ENCODE measurements at regions of chr15 and their contacts with region 1.

Region 1: GRCh38 chr15:81274931-81275707 is 48.8 kb downstream of the STARD5 start:
- DNase-seq: peak; percentile 72
- ATAC-seq: peak; percentile 82
- H3K4me3 Mint-ChIP-seq: no peak overlapping the region
- H3K27ac Mint-ChIP-seq: peak overlapping the region; percentile 49
- H3K4me1 Mint-ChIP-seq: peaks cover 52% of the 10 kb centered on the region
- H3K27me3 Mint-ChIP-seq: no peaks in the 10 kb centered on the region
- CTCF ChIP-seq: peak; percentile 74

Region 2: GRCh38 chr15:81286621-81287121 is 11.6 kb after region 1 on chr15:
- CTCF ChIA-PET with region 1: interaction called, 90 read pairs
- POLR2A ChIA-PET with region 1: interaction called, 42 read pairs
- intact Hi-C with region 1: no loop called
- DNase-seq: peak; percentile 41
- ATAC-seq: peak; percentile 89
- H3K4me3 Mint-ChIP-seq: peak overlapping the region; percentile 79
- H3K27ac Mint-ChIP-seq: peak overlapping the region; percentile 97
- H3K4me1 Mint-ChIP-seq: peaks cover 78% of the 10 kb centered on the region
- H3K27me3 Mint-ChIP-seq: no peaks in the 10 kb centered on the region
- CTCF ChIP-seq: no peak

Region 3: GRCh38 chr15:81301815-81302399 is 26.8 kb after region 1 on chr15:
- CTCF ChIA-PET with region 1: interaction called, 90 read pairs
- POLR2A ChIA-PET with region 1: interaction called, 10 read pairs
- intact Hi-C with region 1: no loop called
- DNase-seq: peak; percentile 72
- ATAC-seq: peak; percentile 61
- H3K4me3 Mint-ChIP-seq: peak overlapping the region; percentile 98
- H3K27ac Mint-ChIP-seq: peak overlapping the region; percentile 98
- H3K4me1 Mint-ChIP-seq: peaks cover 56% of the 10 kb centered on the region
- H3K27me3 Mint-ChIP-seq: no peaks in the 10 kb centered on the region
- CTCF ChIP-seq: no peak

Region 4: DNA sequence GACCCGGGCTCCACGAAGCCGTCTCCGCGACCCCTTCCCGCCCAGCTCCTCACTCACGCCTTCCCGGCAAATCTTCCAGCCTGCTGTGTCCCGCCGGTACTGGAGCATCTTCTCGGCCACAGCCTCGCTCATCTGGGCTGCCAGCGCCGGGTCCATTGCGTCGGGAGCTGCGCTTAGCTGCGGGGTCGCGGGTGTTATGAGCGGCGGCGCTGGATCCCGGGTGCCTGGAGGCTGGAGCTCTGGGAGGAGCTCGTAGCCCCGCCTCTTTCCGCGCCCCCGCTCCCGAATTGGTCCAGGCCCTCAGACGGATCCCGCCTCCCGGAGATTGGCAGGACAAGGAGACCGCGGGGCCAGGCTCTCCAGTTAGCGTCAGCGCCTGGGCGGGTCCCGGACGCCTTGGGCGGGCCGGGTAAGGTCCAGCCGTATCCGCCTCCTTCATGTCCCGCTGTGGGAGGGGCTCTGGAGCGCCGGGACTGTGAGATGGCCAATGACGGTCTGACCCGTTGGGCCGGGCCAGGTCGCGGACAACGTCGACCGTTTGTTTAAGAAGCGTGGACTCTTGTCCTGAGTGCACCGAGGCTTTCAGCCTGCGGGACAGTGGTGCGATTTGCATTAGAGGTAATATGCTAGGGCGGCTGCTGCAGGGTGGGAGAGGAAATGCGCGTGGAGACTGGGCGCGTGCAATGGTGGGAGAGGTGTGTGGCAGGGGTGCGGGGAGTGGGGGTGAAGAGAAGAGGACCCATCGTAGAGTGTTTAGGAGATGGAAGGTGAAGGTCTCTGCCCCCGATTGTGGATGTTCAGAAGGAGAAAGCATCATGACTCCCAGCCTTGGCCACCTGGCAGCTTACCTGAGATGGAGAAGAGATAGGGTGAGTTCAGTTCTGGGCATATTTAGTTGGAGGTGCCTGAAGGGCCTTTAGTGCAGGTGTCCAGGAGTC is 49.1 kb after region 1 on chr15 and contains the start of gene STARD5:
- CTCF ChIA-PET with region 1: interaction called, 19 read pairs
- POLR2A ChIA-PET with region 1: interaction called, 5 read pairs
- intact Hi-C with region 1: loop called (anchors 5 kb)
- DNase-seq: peak; percentile 98
- ATAC-seq: peak; percentile 100
- H3K4me3 Mint-ChIP-seq: peak within 1 kb of the TSS; percentile 84
- H3K27ac Mint-ChIP-seq: peak within 1 kb of the TSS; percentile 86
- H3K4me1 Mint-ChIP-seq: peaks cover 37% of the 10 kb centered on the region
- H3K27me3 Mint-ChIP-seq: no peaks in the 10 kb centered on the region
- CTCF ChIP-seq: no peak
- total RNA-seq, gene STARD5: 6.7 to 6.9 TPM

Region 5: GRCh38 chr15:81336568-81336967 is 61.4 kb after region 1 on chr15:
- CTCF ChIA-PET with region 1: interaction called, 25 read pairs
- POLR2A ChIA-PET with region 1: no interaction called
- intact Hi-C with region 1: loop called (anchors 5 kb)
- DNase-seq: peak; percentile 60
- ATAC-seq: peak; percentile 55
- H3K4me3 Mint-ChIP-seq: no peak overlapping the region
- H3K27ac Mint-ChIP-seq: no peak overlapping the region
- H3K4me1 Mint-ChIP-seq: peaks cover 7% of the 10 kb centered on the region
- H3K27me3 Mint-ChIP-seq: no peaks in the 10 kb centered on the region
- CTCF ChIP-seq: peak; percentile 43

Region 6: DNA sequence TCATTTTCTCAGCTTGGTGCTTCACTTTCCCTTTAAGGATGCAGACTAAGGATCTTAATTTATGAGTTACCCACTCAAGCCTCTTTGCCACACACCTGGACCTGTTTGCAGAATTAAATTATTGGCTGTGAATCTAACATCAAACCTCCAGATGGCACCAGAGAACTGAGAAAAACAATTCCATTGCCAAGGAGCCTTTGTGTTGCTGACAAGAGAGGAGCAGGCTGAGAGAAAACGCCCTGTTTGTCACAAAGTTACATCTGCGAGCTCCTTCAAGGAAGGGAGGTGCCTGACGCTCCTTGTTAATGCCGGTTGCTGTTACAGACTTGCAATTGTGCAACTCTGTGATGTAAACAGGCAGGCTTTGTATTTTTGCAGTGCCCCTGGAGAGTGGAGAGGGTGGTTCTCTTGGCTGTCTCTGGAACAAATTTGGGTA is 135.2 kb after region 1 on chr15:
- CTCF ChIA-PET with region 1: interaction called, 10 read pairs
- POLR2A ChIA-PET with region 1: interaction called, 3 read pairs
- intact Hi-C with region 1: no loop called
- DNase-seq: peak; percentile 25
- ATAC-seq: peak; percentile 62
- H3K4me3 Mint-ChIP-seq: no peak overlapping the region
- H3K27ac Mint-ChIP-seq: no peak overlapping the region
- H3K4me1 Mint-ChIP-seq: peaks cover 9% of the 10 kb centered on the region
- H3K27me3 Mint-ChIP-seq: peaks cover 7% of the 10 kb centered on the region
- CTCF ChIP-seq: peak; percentile 43

Measured in activated CD8-positive, alpha-beta T cell treated with anti-CD3 and anti-CD28 coated beads for 36 hours (primary cell).